ENCODE measurements at regions of chr11 and their contacts with region 1.

Region 1: GRCh38 chr11:63838678-63839507 is at the start of gene MARK2:
- DNase-seq: peak; percentile 98
- ATAC-seq: peak; percentile 92
- total RNA-seq, gene MARK2: 35.8 TPM

Region 2: GRCh38 chr11:63871962-63872799 is 33.3 kb after region 1 on chr11:
- intact Hi-C with region 1: loop called (anchors 2 kb)
- DNase-seq: peak; percentile 76
- ATAC-seq: peak; percentile 93

Region 3: DNA sequence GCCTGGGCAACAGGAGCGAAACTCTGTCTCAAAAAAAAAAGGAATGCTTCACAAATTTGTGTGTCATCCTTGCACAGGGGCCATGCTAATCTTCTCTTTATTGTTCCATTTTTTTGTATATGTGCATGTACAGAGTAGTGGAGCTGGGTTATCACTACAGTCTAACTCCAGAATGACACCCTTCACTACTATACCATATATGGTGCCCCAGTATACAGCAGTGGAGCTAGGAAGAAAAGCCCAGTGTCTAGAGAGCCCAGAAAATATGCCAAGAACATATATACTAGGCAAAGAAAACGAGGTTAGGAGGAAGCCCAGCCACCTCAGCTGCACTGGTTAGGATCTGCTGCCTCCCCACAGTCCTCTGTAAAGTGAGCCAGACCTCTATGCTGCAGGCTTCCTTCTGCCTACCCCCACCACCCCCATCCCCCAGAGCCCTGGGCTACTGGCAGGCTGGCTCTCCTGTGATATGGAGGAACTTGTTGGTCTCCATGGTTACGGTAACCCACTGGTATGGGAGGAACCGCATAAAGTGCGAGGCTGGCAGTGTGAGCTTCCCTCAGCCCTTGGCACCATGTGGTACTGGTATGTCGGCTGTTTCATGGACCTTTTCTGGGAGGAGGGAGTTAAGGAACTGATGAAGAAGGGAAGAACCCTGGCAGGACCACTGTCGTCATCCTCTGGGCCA is 43.8 kb after region 1 on chr11:
- intact Hi-C with region 1: no loop called
- DNase-seq: peak; percentile 68
- ATAC-seq: peak; percentile 54

Region 4: DNA sequence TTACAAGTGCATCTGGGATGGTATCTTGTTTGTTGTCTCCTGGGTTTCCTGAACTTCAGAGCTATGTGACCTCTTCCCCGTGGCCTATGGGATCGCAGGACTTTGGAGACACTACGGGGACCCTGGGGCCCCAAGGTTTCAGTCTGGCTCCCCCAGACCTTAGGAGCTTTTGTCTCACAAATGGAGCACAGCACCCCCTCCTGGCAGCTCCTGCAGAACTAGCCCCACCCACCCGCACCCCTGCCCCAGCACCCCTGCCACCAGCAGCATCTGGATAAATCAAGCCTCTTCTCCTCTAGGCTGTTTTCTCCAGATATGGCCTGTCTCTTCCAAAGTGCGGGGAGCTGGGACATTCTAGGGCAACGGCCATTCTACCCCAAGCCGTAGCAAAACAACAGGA is 67.7 kb after region 1 on chr11:
- intact Hi-C with region 1: no loop called
- DNase-seq: no peak
- ATAC-seq: no peak

Region 5: GRCh38 chr11:63945477-63946163 is 106.7 kb after region 1 on chr11:
- intact Hi-C with region 1: loop called (anchors 2 kb)
- DNase-seq: peak; percentile 72
- ATAC-seq: peak; percentile 86

Region 6: DNA sequence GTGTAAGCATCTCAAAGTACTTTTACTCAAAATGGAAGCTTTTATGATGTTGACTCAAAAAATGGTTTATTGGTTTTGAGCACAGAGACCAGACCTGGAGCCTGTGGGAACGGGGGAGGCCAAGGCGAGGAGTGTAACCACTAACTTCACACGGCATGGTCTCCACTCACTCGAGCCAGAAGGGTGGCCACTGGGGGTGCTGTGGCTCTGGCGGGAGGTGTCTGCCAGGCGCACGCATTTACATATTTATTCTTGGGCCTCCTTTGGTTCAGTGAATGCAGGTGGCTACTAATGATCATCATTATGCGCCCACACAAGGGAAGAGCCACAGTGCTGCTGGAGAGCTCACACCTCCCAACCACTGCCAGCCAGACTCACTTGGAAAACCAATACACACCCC is 261.5 kb after region 1 on chr11:
- intact Hi-C with region 1: no loop called
- DNase-seq: no peak
- ATAC-seq: no peak

Region 7: DNA sequence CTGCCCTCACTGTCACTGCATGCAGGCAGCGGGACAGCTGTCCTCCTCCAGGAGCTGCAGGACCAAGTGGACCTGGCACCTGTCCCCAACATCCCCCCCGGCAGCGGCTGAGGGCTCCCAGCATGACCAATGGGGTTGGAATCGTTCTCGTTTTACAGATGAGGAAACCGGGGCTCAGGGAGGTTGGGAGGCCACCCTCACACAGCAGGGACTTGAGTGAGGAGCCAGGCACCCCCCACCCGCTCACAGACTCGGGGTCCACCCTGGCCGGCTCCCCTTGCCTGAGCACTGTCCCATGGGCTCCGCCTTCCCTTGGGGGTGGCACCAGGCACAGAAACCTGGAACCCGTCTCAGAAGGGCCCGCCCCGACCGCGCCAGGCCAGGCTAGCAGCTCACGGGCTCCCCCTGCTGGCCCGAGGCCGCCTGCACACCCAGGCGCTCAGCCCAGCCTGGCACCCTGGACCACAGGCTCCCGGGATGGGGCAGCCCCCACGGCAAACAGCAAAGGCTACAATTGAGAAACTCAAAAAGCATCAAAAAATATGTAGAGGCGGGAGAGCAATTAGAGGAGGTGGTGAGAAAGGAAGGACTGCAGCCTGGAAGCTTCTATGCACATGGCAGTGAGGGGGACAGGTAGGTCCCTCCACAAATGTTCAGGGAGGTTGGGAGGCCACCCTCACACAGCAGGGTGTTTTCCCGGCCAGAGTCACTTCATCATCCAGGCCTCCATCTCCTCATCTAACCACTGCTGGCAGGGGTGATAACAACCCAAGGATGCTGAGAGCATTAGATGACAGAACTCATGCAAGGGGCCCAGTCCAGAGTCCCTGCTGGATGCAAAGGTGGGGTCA is 314.2 kb after region 1 on chr11:
- intact Hi-C with region 1: loop called (anchors 10 kb)
- DNase-seq: peak; percentile 80
- ATAC-seq: peak; percentile 55

Measured in Right ventricle myocardium superior (tissue), 1 donor.